Calu3 (cell line): ENCODE measurements at regions of chr2 and their contacts with region 1.

Region 1: GRCh38 chr2:168336864-168337263 is 89.5 kb upstream of the STK39 start:
- DNase-seq: peak; percentile 88
- H3K4me3 Mint-ChIP-seq: peak overlapping the region; percentile 55
- H3K27ac Mint-ChIP-seq: peak overlapping the region; percentile 40
- H3K4me1 Mint-ChIP-seq: peaks cover 18% of the 10 kb centered on the region
- H3K27me3 Mint-ChIP-seq: no peaks in the 10 kb centered on the region
- CTCF ChIP-seq: peak; percentile 64

Region 2: DNA sequence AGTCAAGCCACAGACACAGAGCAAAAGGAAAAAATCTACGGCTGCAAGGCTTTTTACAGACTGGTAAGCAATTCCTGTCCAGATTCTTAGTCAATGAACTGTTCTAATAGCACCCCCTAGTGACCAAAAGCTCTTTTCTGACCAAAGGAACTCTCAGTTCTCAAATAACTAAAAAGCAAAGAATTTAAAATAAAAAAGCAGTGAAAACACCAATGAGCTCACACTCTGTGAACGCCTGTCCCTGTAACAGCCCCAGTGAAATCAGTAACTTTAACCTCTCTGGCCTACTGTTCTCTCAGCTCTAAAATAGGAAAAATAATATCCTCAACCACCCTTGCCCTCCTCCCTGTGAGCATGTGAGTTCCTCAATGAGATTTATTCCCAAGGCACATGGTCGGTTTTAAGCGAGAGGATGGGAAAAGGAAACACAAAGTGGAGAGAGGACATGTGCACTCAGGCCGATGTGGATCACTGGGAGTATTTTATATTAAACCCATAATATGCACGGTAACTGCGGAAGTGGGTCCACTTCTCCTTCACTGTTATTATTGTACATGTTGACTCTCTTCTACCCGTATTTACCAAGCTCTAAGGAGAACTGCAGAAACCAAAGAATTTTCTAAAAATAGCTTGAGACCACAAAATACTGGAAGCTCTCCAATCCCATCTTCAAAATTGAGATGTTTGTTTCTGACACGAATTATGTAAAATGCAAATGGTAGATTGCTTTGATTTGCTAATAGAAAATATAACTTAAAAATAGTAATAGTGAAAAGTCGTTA is 217.9 kb before region 1 on chr2:
- CTCF ChIA-PET with region 1: interaction called, 10 read pairs
- intact Hi-C with region 1: no loop called
- DNase-seq: peak; percentile 41
- H3K4me3 Mint-ChIP-seq: no peak overlapping the region
- H3K27ac Mint-ChIP-seq: no peak overlapping the region
- H3K4me1 Mint-ChIP-seq: no peaks in the 10 kb centered on the region
- H3K27me3 Mint-ChIP-seq: no peaks in the 10 kb centered on the region
- CTCF ChIP-seq: peak; percentile 49

Region 3: GRCh38 chr2:168136392-168136977 is 200.4 kb before region 1 on chr2:
- CTCF ChIA-PET with region 1: interaction called, 7 read pairs
- intact Hi-C with region 1: loop called (anchors 2 kb)
- DNase-seq: no peak
- H3K4me3 Mint-ChIP-seq: no peak overlapping the region
- H3K27ac Mint-ChIP-seq: peak overlapping the region; percentile 97
- H3K4me1 Mint-ChIP-seq: peaks cover 62% of the 10 kb centered on the region
- H3K27me3 Mint-ChIP-seq: no peaks in the 10 kb centered on the region
- CTCF ChIP-seq: peak; percentile 46

Region 4: DNA sequence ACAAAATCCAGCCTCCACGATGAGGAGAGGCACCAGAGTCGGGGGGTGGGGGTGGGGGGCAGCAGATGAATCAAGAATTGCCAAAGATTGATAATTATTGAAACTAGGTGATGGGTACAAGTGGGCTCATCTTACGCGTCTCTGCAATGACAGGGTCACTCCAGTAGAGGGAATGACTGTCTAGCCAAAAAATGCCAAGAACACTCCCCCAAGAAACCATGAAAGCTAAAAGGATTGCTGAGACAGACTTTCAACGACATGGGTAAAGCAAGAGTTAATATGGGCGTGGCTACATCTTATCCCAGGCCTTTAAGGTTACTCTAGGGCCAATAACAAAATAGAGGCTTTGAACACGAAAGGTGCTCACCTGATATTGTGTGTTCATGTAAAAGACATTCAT is 176.0 kb before region 1 on chr2:
- CTCF ChIA-PET with region 1: interaction called, 4 read pairs
- intact Hi-C with region 1: loop called (anchors 10 kb)
- DNase-seq: no peak
- H3K4me3 Mint-ChIP-seq: no peak overlapping the region
- H3K27ac Mint-ChIP-seq: no peak overlapping the region
- H3K4me1 Mint-ChIP-seq: peaks cover 3% of the 10 kb centered on the region
- H3K27me3 Mint-ChIP-seq: no peaks in the 10 kb centered on the region
- CTCF ChIP-seq: no peak

Region 5: DNA sequence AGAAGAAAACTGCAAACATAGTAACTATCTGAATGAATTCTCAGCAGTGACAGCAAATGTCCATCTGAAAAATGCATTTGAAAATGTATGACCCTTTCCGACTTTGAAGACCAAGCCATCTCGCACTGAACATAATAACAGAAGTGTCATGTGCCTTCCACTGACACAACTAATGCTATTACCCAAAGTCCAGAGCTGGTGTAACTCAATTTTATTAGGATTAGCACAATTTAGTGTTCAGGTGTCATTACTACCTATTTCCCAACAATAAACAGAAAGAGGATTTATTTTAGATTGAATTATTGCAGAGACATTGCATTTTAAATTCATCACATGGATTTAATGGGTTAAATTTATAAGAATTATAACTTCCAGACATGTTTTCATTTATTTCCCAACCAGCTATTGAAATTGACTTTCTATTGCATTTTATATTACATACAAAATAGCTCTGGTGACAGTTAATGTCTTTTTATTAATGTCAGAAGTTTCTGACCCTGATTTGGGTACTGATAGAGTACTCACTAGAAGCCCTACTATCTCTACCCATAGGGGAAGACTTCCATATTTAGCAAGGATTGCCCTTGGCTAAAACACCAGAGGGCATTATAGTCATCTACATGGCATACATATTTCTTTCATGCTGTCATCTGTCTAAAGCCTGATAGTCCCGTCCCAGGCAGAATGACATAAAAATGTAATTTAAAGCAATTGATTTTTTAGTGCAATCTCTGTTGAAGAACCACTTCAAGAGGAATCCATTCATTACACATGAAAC is 82.5 kb before region 1 on chr2:
- CTCF ChIA-PET with region 1: interaction called, 5 read pairs
- intact Hi-C with region 1: loop called (anchors 2 kb)
- DNase-seq: no peak
- H3K4me3 Mint-ChIP-seq: no peak overlapping the region
- H3K27ac Mint-ChIP-seq: no peak overlapping the region
- H3K4me1 Mint-ChIP-seq: peaks cover 14% of the 10 kb centered on the region
- H3K27me3 Mint-ChIP-seq: no peaks in the 10 kb centered on the region
- CTCF ChIP-seq: no peak

Region 6: GRCh38 chr2:168278424-168278888 is 58.4 kb before region 1 on chr2:
- CTCF ChIA-PET with region 1: no interaction called
- intact Hi-C with region 1: loop called (anchors 5 kb)
- DNase-seq: peak; percentile 76
- H3K4me3 Mint-ChIP-seq: peak overlapping the region; percentile 18
- H3K27ac Mint-ChIP-seq: peak overlapping the region; percentile 92
- H3K4me1 Mint-ChIP-seq: peaks cover 27% of the 10 kb centered on the region
- H3K27me3 Mint-ChIP-seq: no peaks in the 10 kb centered on the region
- CTCF ChIP-seq: no peak

Region 7: DNA sequence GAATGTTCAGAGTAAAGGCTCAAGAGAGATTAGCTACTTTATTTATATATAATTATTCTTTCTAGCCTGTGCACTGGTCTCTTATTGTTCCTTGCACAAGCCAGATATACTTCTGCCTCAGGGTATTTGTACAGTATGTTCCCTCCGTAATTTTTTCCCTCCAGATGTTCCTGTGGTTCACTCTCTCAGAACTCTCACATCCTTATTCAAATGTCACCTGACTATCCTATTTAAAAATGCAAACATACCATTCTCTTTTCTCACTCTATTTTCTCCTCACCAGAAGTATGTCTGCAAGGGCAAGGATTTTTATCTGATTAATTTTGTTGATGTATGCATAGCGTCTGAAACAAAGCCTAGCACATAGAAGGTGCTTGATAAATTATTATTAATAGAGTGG is 55.2 kb after region 1 on chr2:
- CTCF ChIA-PET with region 1: no interaction called
- intact Hi-C with region 1: no loop called
- DNase-seq: no peak
- H3K4me3 Mint-ChIP-seq: no peak overlapping the region
- H3K27ac Mint-ChIP-seq: no peak overlapping the region
- H3K4me1 Mint-ChIP-seq: no peaks in the 10 kb centered on the region
- H3K27me3 Mint-ChIP-seq: peaks cover 15% of the 10 kb centered on the region
- CTCF ChIP-seq: no peak